ENCODE measurements at regions of chr9 and their contacts with region 1.

Region 1: DNA sequence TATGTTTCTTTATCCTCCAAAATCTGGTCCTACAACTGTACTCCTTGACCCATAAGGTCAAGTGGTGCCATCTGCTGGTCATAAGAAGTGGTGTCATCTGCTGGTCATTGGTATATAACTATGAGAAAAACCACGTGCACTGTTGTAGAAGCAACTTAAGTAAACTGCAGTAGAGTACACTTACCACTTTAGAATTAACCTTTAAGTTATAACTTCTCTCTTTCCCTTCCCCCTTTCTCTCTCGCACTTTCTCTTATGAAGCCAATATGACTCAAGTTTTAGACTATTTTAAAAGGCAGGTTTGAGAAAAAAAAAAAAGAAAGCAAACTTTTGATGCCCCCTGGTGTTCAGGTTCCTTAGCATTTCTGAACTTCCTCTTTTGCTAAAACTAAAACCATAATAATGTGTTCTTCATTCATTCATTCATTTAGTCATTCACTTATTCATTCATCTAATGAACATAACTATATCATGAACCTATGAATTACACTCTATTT is 12.8 kb upstream of the MTAP start:
- DNase-seq: peak in 4 of 5 donors; percentile 29 to 44 (median 38)
- ATAC-seq: peak; percentile 71 to 95 (median 89)
- H3K4me3 ChIP-seq: peak overlapping the region in 6 of 12 donors; percentile 6 to 39 (median 20)
- H3K27ac ChIP-seq: no peak overlapping the region
- H3K4me1 ChIP-seq: no peaks in the 10 kb centered on the region
- H3K27me3 ChIP-seq: peaks cover 0 to 33% (median 5%) of the 10 kb centered on the region in 9 donors
- CTCF ChIP-seq: peak; percentile 67 to 91 (median 82)
- POLR2A ChIP-seq: no peak

Region 2: GRCh38 chr9:21239911-21240310 is 549.7 kb before region 1 on chr9 and contains the start of gene IFNA14:
- intact Hi-C with region 1: loop called in 2 of 10 experiments (anchors 10 kb)
- DNase-seq: no peak
- ATAC-seq: no peak
- H3K4me3 ChIP-seq: no peak within 1 kb of the TSS
- H3K27ac ChIP-seq: no peak within 1 kb of the TSS
- H3K4me1 ChIP-seq: peaks cover 0 to 5% (median 0%) of the 10 kb centered on the region in 12 donors
- H3K27me3 ChIP-seq: peaks cover 0 to 26% (median 7%) of the 10 kb centered on the region in 9 donors
- CTCF ChIP-seq: no peak
- POLR2A ChIP-seq: no peak
- total RNA-seq, gene IFNA14: not detected

Region 3: GRCh38 chr9:21317956-21318923 is 471.3 kb before region 1 on chr9:
- intact Hi-C with region 1: loop called in 8 of 10 experiments (anchors 2 to 5 kb)
- DNase-seq: peak in 1 of 5 donors; percentile 10
- ATAC-seq: peak in 3 of 4 donors; percentile 70 to 83 (median 74)
- H3K4me3 ChIP-seq: no peak overlapping the region
- H3K27ac ChIP-seq: no peak overlapping the region
- H3K4me1 ChIP-seq: peaks cover 0 to 8% (median 0%) of the 10 kb centered on the region in 12 donors
- H3K27me3 ChIP-seq: no peaks in the 10 kb centered on the region
- CTCF ChIP-seq: peak; percentile 43 to 81 (median 64)
- POLR2A ChIP-seq: no peak

Region 4: GRCh38 chr9:21334701-21335632 is 454.6 kb before region 1 on chr9 and contains the start of gene KLHL9:
- intact Hi-C with region 1: loop called in 1 of 10 experiments (anchors 5 kb)
- DNase-seq: peak; percentile 94 to 97 (median 95)
- ATAC-seq: peak; percentile 99 to 100 (median 100)
- H3K4me3 ChIP-seq: peak within 1 kb of the TSS; percentile 69 to 97 (median 82)
- H3K27ac ChIP-seq: peak within 1 kb of the TSS; percentile 91 to 99 (median 94)
- H3K4me1 ChIP-seq: peaks cover 12 to 50% (median 44%) of the 10 kb centered on the region in 12 donors
- H3K27me3 ChIP-seq: peaks cover 0 to under 1% (median 0%) of the 10 kb centered on the region in 9 donors
- CTCF ChIP-seq: peak in 1 of 12 donors; percentile 22
- POLR2A ChIP-seq: peak in 1 of 2 donors; percentile 59
- total RNA-seq, gene KLHL9: 10.7 to 15.1 (median 11.8) TPM

Region 5: GRCh38 chr9:21559424-21560280 is 229.9 kb before region 1 on chr9:
- intact Hi-C with region 1: no loop called
- DNase-seq: peak in 3 of 5 donors; percentile 21 to 49 (median 27)
- ATAC-seq: no peak
- H3K4me3 ChIP-seq: peak overlapping the region; percentile 29 to 59 (median 43)
- H3K27ac ChIP-seq: no peak overlapping the region
- H3K4me1 ChIP-seq: peaks cover 0 to 18% (median 8%) of the 10 kb centered on the region in 12 donors
- H3K27me3 ChIP-seq: peaks cover 13 to 95% (median 67%) of the 10 kb centered on the region in 9 donors
- CTCF ChIP-seq: no peak
- POLR2A ChIP-seq: no peak

Region 6: DNA sequence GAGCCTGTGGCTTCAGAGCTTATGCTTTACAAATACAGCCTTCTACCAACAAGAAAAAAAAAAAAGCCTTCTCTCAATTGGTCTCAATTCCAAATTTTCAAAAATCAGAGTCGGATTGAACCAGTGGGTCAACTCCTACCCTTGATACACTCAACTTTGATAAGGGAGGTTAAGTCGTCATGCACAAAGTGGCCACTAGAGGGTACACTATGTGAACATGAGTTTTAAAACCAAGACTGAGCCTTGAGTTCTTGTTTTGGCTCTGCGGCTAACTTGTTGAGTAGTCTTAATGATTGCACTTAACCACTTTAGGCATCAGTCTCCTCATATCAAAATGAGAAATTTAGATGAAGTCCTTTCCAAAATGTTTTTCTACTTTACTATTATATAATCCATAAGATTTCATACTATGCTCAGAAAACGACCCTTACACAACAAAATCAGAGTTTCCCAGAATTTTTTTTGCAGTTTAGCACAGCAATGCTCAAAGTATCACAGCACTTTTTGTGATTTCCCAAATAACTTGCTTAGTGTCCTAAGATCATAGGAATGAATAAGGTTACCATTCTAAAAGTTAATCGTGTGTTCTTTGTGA is 80.0 kb before region 1 on chr9:
- intact Hi-C with region 1: loop called in 1 of 10 experiments (anchors 10 kb)
- DNase-seq: peak in 1 of 5 donors; percentile 22
- ATAC-seq: peak in 1 of 4 donors; percentile 29
- H3K4me3 ChIP-seq: no peak overlapping the region
- H3K27ac ChIP-seq: no peak overlapping the region
- H3K4me1 ChIP-seq: no peaks in the 10 kb centered on the region
- H3K27me3 ChIP-seq: peaks cover 0 to 8% (median 0%) of the 10 kb centered on the region in 9 donors
- CTCF ChIP-seq: peak; percentile 54 to 89 (median 74)
- POLR2A ChIP-seq: no peak

Region 7: GRCh38 chr9:21883642-21884041 is 94.1 kb after region 1 on chr9:
- intact Hi-C with region 1: no loop called
- DNase-seq: no peak
- ATAC-seq: no peak
- H3K4me3 ChIP-seq: no peak overlapping the region
- H3K27ac ChIP-seq: no peak overlapping the region
- H3K4me1 ChIP-seq: no peaks in the 10 kb centered on the region
- H3K27me3 ChIP-seq: no peaks in the 10 kb centered on the region
- CTCF ChIP-seq: no peak
- POLR2A ChIP-seq: no peak